H1 (cell line): ENCODE measurements at regions of chr3 and their contacts with region 1.

Region 1: GRCh38 chr3:128572644-128573105 is 77.9 kb downstream of the RPN1 start:
- DNase-seq: peak in 1 of 2 experiments; percentile 65
- H3K4me3 ChIP-seq: no peak overlapping the region
- H3K27ac ChIP-seq: no peak overlapping the region
- H3K4me1 ChIP-seq: peaks cover 6 to 13% (median 7%) of the 10 kb centered on the region in 4 experiments; a peak in 6 of 7 replicates
- H3K27me3 ChIP-seq: no peaks in the 10 kb centered on the region
- CTCF ChIP-seq: peak in 2 of 3 experiments; percentile 58 to 79; a peak in 3 of 4 replicates
- EP300 ChIP-seq: no peak
- POLR2A ChIP-seq: no peak
- RAD21 ChIP-seq: peak; percentile 31 to 44; a peak in 3 of 4 replicates

Region 2: GRCh38 chr3:128532012-128532983 is 40.4 kb before region 1 on chr3:
- CTCF ChIA-PET with region 1: interaction called, 11 read pairs
- POLR2A ChIA-PET with region 1: no interaction called
- DNase-seq: no peak
- H3K4me3 ChIP-seq: no peak overlapping the region
- H3K27ac ChIP-seq: no peak overlapping the region
- H3K4me1 ChIP-seq: no peaks in the 10 kb centered on the region; a peak in 2 of 7 replicates
- H3K27me3 ChIP-seq: no peaks in the 10 kb centered on the region
- CTCF ChIP-seq: no peak
- EP300 ChIP-seq: no peak
- POLR2A ChIP-seq: no peak
- RAD21 ChIP-seq: no peak

Region 3: GRCh38 chr3:128559486-128560225 is 13.0 kb before region 1 on chr3:
- CTCF ChIA-PET with region 1: interaction called, 20 read pairs
- POLR2A ChIA-PET with region 1: interaction called, 3 read pairs
- DNase-seq: no peak
- H3K4me3 ChIP-seq: no peak overlapping the region
- H3K27ac ChIP-seq: no peak overlapping the region
- H3K4me1 ChIP-seq: peaks cover 0 to 10% (median 6%) of the 10 kb centered on the region in 4 experiments; a peak in 6 of 7 replicates
- H3K27me3 ChIP-seq: peaks cover 0 to 20% (median 16%) of the 10 kb centered on the region in 4 experiments; a peak in 6 of 7 replicates
- CTCF ChIP-seq: no peak
- EP300 ChIP-seq: no peak
- POLR2A ChIP-seq: no peak
- RAD21 ChIP-seq: no peak

Region 4: DNA sequence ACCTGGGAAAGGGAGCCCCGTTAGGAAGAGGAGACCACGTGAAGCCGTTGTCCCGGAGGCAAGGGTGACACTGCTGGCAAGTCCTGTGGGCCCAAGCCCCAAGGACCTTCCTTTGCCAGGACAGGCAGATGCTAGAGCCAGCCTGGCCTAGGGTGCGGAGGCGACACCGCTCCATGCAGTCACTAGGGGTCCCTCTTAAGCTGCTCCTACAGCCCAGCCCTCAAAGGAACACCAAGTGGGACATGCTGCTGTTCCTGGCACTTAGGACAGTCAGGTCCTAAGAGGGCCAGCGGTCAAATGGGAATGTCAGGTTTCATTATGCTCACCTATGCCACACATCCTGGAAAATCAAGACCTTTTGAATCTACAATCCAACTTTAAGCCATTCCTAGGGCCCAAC is 18.3 kb after region 1 on chr3:
- CTCF ChIA-PET with region 1: interaction called, 71 read pairs
- POLR2A ChIA-PET with region 1: no interaction called
- DNase-seq: peak in 1 of 2 experiments; percentile 75
- H3K4me3 ChIP-seq: no peak overlapping the region
- H3K27ac ChIP-seq: no peak overlapping the region
- H3K4me1 ChIP-seq: no peaks in the 10 kb centered on the region; a peak in 1 of 7 replicates
- H3K27me3 ChIP-seq: no peaks in the 10 kb centered on the region
- CTCF ChIP-seq: peak; percentile 81 to 90 (median 87)
- EP300 ChIP-seq: no peak
- POLR2A ChIP-seq: no peak
- RAD21 ChIP-seq: peak; percentile 73 to 84